Activated naive CD4-positive, alpha-beta T cell treated with anti-CD3 and anti-CD28 coated beads for 36 hours (primary cell): ENCODE measurements at regions of chr1 and their contacts with region 1.

Region 1: GRCh38 chr1:43763497-43763973 is 56.2 kb downstream of the ST3GAL3 start:
- DNase-seq: peak; percentile 68
- H3K4me3 Mint-ChIP-seq: no peak overlapping the region
- H3K27ac Mint-ChIP-seq: no peak overlapping the region
- H3K4me1 Mint-ChIP-seq: no peaks in the 10 kb centered on the region
- H3K27me3 Mint-ChIP-seq: no peaks in the 10 kb centered on the region

Region 2: GRCh38 chr1:43912607-43913006 is 149.1 kb after region 1 on chr1:
- CTCF ChIA-PET with region 1: interaction called, 11 read pairs
- intact Hi-C with region 1: no loop called
- DNase-seq: no peak
- H3K4me3 Mint-ChIP-seq: no peak overlapping the region
- H3K27ac Mint-ChIP-seq: no peak overlapping the region
- H3K4me1 Mint-ChIP-seq: no peaks in the 10 kb centered on the region
- H3K27me3 Mint-ChIP-seq: no peaks in the 10 kb centered on the region

Region 3: DNA sequence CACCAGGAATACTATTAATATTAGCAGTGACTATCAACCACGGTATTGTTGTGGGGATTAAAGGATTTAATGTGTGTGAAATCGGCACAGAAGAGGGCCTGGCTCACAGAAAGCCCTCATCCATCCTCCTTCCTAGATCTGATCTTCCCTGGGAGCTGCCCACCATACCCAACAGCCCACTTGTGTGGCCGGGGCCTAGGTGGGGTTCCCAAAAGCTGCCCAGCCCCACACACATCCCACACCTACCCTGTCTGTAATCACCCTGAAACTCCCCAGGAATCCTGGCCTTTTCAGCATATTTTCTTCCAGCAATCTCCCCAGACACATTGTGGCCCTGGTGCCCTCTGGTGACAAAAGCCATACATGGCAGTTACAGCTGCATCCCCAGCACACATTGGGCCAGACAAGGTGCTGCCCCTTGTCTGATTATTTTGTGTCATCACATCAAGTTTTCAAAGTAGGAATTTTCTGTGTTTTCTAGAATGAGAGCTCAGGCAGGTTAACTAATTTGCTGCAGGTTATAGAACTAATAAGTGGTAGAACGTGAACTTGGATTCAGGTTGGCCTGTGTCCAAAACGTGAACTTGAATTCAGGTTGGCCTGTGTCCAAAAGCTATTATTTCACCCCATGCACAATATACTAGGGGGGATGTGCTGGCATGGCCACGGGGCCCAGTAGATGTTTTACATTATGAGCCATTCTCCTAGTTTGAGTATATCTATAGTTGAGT is 273.0 kb after region 1 on chr1:
- CTCF ChIA-PET with region 1: interaction called, 14 read pairs
- intact Hi-C with region 1: loop called (anchors 1 kb)
- DNase-seq: peak; percentile 88
- H3K4me3 Mint-ChIP-seq: no peak overlapping the region
- H3K27ac Mint-ChIP-seq: no peak overlapping the region
- H3K4me1 Mint-ChIP-seq: peaks cover 8% of the 10 kb centered on the region
- H3K27me3 Mint-ChIP-seq: no peaks in the 10 kb centered on the region

Region 4: GRCh38 chr1:44048816-44049215 is 285.3 kb after region 1 on chr1:
- CTCF ChIA-PET with region 1: interaction called, 13 read pairs
- intact Hi-C with region 1: loop called (anchors 1 kb)
- DNase-seq: no peak
- H3K4me3 Mint-ChIP-seq: no peak overlapping the region
- H3K27ac Mint-ChIP-seq: peak overlapping the region; percentile 47
- H3K4me1 Mint-ChIP-seq: peaks cover 21% of the 10 kb centered on the region
- H3K27me3 Mint-ChIP-seq: peaks cover 11% of the 10 kb centered on the region